Ovary (tissue), 10 donors: ENCODE measurements at regions of chr13 and their contacts with region 1.

Region 1: GRCh38 chr13:52128714-52129700 is at the start of gene NEK5:
- DNase-seq: peak; percentile 43 to 76 (median 53)
- H3K4me3 ChIP-seq: peak within 1 kb of the TSS; percentile 61
- H3K27ac ChIP-seq: no peak within 1 kb of the TSS
- H3K4me1 ChIP-seq: no peaks in the 10 kb centered on the region
- H3K27me3 ChIP-seq: no peaks in the 10 kb centered on the region
- CTCF ChIP-seq: peak; percentile 26 to 52 (median 46)
- EP300 ChIP-seq: no peak
- POLR2A ChIP-seq: no peak
- total RNA-seq, gene NEK5: 0.18 to 12.4 (median 0.58) TPM in 6 of 7 donors, not detected in the other

Region 2: DNA sequence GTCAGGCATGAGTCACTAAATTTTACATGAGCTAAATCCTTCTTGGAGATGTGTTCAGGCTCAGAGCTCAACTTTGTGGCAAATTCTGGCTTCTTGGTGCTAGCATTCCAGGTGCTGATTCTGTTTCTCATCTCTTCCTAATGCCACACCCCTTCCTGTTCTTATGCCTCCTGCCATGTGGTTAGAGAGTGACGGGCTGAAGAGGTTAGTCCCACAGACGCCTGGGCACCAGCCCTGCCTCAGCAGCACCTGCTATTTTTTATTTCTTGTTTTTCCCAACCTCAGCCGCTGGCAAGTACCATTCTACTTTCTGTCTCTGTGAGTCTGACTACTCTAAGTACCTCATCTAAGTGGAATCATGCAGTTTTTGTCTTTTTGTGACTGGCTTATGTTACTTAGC is 1784.3 kb before region 1 on chr13:
- intact Hi-C with region 1: no loop called
- DNase-seq: no peak
- H3K4me3 ChIP-seq: no peak overlapping the region
- H3K27ac ChIP-seq: no peak overlapping the region
- H3K4me1 ChIP-seq: no peaks in the 10 kb centered on the region
- H3K27me3 ChIP-seq: no peaks in the 10 kb centered on the region
- CTCF ChIP-seq: no peak
- EP300 ChIP-seq: no peak
- POLR2A ChIP-seq: no peak

Region 3: DNA sequence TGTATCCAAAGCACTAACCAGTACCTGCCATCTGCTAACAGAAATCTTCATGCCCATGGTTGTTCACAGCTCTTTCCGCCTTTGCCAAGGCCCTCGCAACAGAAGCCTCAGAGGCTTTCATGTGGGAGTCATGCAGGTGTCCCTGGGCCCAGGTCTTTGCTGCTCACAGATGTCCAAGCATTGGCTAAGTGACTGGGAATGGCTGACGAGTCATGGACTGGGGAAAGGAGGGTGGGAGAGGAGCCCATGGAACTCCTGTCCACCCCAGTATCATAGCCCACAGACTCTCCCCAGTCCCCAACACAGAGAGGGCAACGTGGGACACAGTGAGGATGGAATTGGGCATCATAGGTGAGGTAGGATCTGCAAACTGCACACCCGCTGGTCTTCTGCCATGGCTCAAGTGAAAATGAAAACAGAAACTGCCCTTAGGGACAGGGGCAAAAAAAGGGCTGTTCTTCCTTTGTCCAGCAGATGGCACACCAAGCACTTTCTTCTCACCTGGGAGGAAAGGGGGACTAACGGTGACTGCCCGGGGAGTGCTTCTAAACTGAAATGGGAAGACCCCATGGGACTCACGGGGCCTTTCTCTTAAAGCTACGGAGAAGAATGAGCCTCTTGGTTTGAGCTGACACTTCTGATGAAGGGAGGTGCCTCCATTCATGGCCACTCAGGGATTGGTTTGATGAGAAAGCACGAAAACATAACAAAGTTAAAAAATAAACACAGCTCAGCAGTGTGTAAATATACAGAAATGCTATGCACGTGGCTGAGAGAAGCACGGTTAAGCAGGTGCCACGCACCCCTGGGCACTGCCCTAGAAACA is 314.0 kb before region 1 on chr13:
- intact Hi-C with region 1: loop called in 2 of 4 experiments (anchors 10 kb)
- DNase-seq: peak in 4 of 5 donors; percentile 43 to 71 (median 50)
- H3K4me3 ChIP-seq: no peak overlapping the region
- H3K27ac ChIP-seq: no peak overlapping the region
- H3K4me1 ChIP-seq: no peaks in the 10 kb centered on the region
- H3K27me3 ChIP-seq: no peaks in the 10 kb centered on the region
- CTCF ChIP-seq: peak in 2 of 3 donors; percentile 41 to 68
- EP300 ChIP-seq: no peak
- POLR2A ChIP-seq: no peak

Region 4: DNA sequence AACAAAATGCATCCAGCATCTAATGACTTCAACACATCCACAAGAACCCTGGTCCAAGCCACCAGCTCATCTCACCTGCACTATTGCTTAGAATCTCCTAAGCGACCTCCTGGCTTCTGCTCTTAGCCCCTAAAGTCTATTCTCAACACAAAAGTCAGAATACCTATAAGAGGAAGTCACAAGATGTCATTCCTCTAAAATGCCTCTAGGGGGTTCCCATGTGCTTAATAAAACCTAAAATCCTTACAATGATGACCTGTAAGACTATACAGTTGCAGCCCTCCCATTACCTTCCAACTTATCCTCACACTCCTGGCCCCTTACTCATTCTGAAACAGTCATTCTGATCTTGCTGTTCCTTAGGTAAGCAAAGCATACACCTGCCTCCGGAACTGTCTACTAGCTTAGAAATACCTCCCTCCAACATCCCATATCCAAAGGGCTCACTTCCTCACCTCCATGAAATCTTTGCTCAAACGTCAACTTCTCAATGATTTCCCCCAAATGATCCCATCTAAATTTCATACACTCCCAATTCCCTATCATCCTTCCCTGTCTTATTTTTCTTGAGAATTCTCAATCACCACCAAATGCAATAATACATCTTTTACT is 127.8 kb before region 1 on chr13:
- intact Hi-C with region 1: loop called in 1 of 4 experiments (anchors 10 kb)
- DNase-seq: no peak
- H3K4me3 ChIP-seq: no peak overlapping the region
- H3K27ac ChIP-seq: no peak overlapping the region
- H3K4me1 ChIP-seq: peaks cover under 1% of the 10 kb centered on the region
- H3K27me3 ChIP-seq: no peaks in the 10 kb centered on the region
- CTCF ChIP-seq: no peak
- EP300 ChIP-seq: no peak
- POLR2A ChIP-seq: no peak